Heart right ventricle (tissue), 16 donors: ENCODE measurements at regions of chr9 and their contacts with region 1.

Region 1: GRCh38 chr9:92917176-92917800 is 30.0 kb upstream of the FGD3 start:
- DNase-seq: no peak
- ATAC-seq: peak in 1 of 8 donors; percentile 19
- H3K4me3 ChIP-seq: no peak overlapping the region
- H3K27ac ChIP-seq: no peak overlapping the region
- H3K4me1 ChIP-seq: no peaks in the 10 kb centered on the region
- H3K27me3 ChIP-seq: peaks cover 4 to 34% (median 17%) of the 10 kb centered on the region in 7 donors
- CTCF ChIP-seq: no peak

Region 2: DNA sequence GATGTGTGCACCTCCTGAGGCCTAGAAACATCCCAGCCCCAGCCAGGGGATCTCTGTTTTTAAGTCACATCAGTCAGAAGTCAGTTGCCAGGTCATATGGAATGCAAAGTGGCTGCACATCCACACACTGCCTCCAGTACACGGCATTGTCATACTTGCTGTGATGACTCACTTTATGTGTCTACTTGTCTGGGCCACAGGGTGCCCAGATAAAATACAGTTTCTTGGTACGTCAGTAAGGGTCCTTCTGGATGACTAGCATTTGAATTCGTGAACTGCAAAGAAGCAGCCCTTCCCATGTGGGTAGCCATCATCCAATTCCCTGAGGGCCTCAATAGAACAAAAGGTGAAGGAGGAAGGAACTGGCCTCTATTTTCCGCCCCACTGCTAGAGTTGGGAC is 1583.2 kb before region 1 on chr9:
- intact Hi-C with region 1: no loop called
- DNase-seq: no peak
- ATAC-seq: peak in 1 of 8 donors; percentile 34
- H3K4me3 ChIP-seq: no peak overlapping the region
- H3K27ac ChIP-seq: no peak overlapping the region
- H3K4me1 ChIP-seq: peaks cover 0 to 12% (median 5%) of the 10 kb centered on the region in 9 donors
- H3K27me3 ChIP-seq: no peaks in the 10 kb centered on the region
- CTCF ChIP-seq: no peak

Region 3: GRCh38 chr9:92048924-92049625 is 868.2 kb before region 1 on chr9:
- intact Hi-C with region 1: loop called in 1 of 10 experiments (anchors 5 kb)
- DNase-seq: no peak
- ATAC-seq: no peak
- H3K4me3 ChIP-seq: no peak overlapping the region
- H3K27ac ChIP-seq: no peak overlapping the region
- H3K4me1 ChIP-seq: no peaks in the 10 kb centered on the region
- H3K27me3 ChIP-seq: no peaks in the 10 kb centered on the region
- CTCF ChIP-seq: no peak

Region 4: GRCh38 chr9:92964998-92965758 is 47.9 kb after region 1 on chr9:
- intact Hi-C with region 1: loop called in 1 of 10 experiments (anchors 5 kb)
- DNase-seq: peak in 1 of 2 donors; percentile 41
- ATAC-seq: peak; percentile 28 to 62 (median 56)
- H3K4me3 ChIP-seq: peak overlapping the region in 8 of 10 donors; percentile 7 to 61 (median 36)
- H3K27ac ChIP-seq: peak overlapping the region in 5 of 10 donors; percentile 28 to 96 (median 47)
- H3K4me1 ChIP-seq: peaks cover 0 to 68% (median 2%) of the 10 kb centered on the region in 9 donors
- H3K27me3 ChIP-seq: peaks cover 0 to 7% (median 0%) of the 10 kb centered on the region in 7 donors
- CTCF ChIP-seq: no peak